Posterior vena cava (tissue), 2 donors: ENCODE measurements at regions of chr13 and their contacts with region 1.

Region 1: DNA sequence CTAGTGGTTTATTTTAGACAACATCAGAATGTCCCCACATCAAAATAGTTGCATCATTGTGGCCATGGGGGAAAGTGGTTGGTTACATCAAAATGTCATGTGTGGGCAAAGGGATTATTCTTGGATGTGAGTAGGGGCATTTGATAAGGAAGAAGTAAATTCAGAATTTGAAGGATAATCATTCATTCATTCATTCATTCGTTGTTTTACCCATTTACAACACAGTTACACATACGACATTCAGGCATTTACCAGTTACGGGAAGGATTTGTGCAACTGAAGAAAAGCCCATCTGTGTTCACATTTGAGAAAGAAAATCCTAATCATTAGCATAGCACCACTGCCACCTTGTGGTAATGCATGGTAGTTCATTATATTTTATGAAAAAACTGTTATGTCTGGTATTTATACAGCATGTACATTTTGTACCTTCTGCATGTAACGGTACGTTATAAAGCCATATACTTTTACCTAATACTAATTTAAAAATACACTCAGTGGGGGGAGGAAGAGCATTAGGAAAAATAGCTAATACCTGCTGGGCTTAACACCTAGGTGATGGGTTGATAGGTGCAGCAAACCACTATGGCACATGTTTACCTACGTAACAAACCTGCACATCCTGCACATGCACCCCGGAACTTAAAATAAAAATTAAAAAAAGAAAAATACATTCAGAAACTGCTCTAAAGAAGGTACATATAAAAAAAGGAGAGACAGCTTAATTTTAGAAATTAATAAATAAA is 62.1 kb downstream of the DGKH start:
- DNase-seq: no peak

Region 2: DNA sequence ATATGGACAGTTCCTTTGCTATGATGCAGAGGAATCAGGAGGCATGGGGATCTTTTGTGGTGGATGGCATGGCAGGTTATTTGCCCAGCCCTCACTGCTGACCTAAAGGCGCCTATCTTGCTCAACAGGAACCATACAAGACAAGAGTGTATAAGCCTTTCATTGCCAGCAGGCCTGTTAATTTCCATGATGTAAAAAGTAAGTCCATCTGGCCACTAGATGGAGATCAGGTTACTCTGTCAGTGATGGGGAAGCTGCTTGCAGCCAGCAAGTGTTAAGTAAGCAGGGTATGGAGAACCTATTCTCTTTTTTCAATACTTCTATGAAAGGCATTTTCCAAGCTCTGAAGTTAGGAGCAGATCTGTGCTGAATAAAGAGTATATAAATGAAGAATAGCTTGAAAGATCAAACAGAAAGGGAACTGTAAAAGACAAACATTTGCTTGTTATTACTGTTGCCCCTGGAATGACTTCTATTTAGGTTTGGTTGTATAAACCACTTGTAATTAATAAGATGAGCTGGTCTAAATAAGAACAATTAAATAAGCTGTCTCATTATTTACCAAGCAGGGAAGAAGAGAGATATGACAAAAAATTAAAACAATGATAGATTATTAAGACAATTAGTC is 442.3 kb before region 1 on chr13:
- intact Hi-C with region 1: loop called (anchors 5 kb)
- DNase-seq: no peak

Region 3: GRCh38 chr13:42125046-42125445 is 14.5 kb after region 1 on chr13:
- intact Hi-C with region 1: no loop called
- DNase-seq: no peak